GM10248 (cell line): ENCODE measurements at regions of chr6 and their contacts with region 1.

Region 1: DNA sequence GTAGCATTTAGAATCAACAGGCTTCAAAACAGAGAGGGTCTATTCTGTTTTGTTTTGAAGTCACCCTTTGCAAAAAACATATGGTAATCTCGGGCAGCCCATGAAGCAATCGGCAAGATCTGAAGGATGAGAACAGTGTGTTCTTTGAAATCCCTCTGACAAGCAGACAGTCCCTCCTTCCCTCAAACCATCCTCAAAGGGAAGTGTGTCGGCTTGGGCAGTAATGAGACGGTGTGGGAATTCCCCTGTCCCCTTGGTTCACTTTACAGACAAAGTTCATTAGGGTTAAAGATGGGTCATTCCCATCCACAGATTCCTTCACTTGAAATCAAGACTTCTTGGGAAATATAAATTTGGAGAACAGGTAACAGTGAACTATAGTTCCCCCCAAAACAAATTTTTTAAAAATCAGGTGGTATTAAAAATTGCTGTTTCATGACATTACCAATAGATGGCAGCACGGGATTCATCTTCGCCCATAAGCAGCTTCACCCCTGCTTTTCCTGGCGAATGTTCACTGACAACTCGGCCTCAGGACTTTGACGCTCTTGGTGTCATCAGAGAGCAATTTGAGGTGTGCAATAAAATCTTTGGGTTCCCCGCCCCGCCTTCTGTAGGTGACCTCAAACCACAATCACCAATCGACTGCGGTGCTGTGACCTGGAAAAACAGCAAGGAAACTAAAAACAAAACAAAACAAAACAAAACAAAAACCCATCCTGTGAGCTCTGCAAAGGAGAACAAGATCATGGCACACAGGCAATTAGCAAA is 159.3 kb upstream of the TNFAIP3 start:
- DNase-seq: peak; percentile 67
- CTCF ChIP-seq: peak; percentile 62

Region 2: DNA sequence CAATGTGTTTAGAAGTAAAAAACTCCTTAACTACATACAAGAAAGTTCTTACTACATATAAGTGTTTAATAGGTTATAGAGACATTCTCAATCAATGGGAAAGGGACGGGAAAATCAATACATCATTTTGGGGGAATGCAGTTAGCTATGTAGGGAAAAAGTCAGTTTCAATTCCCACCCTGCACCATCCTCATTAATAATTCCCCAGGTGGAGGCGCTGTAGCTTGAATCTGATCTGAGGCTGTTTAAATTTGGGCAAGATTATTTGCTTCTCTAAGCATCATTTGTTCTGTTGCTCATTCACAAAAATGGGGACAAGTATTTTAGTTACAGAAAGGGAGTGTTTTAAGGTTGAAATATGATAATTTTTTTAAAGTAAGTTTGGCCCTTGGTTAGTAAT is 232.7 kb before region 1 on chr6:
- CTCF ChIA-PET with region 1: no interaction called
- POLR2A ChIA-PET with region 1: no interaction called
- DNase-seq: no peak
- CTCF ChIP-seq: no peak

Region 3: GRCh38 chr6:137697267-137697938 is 10.4 kb before region 1 on chr6:
- CTCF ChIA-PET with region 1: interaction called, 34 read pairs
- POLR2A ChIA-PET with region 1: no interaction called
- DNase-seq: no peak
- CTCF ChIP-seq: peak; percentile 26

Region 4: GRCh38 chr6:137791281-137792159 is 83.7 kb after region 1 on chr6:
- CTCF ChIA-PET with region 1: interaction called, 20 read pairs
- POLR2A ChIA-PET with region 1: no interaction called
- DNase-seq: no peak
- CTCF ChIP-seq: no peak

Region 5: DNA sequence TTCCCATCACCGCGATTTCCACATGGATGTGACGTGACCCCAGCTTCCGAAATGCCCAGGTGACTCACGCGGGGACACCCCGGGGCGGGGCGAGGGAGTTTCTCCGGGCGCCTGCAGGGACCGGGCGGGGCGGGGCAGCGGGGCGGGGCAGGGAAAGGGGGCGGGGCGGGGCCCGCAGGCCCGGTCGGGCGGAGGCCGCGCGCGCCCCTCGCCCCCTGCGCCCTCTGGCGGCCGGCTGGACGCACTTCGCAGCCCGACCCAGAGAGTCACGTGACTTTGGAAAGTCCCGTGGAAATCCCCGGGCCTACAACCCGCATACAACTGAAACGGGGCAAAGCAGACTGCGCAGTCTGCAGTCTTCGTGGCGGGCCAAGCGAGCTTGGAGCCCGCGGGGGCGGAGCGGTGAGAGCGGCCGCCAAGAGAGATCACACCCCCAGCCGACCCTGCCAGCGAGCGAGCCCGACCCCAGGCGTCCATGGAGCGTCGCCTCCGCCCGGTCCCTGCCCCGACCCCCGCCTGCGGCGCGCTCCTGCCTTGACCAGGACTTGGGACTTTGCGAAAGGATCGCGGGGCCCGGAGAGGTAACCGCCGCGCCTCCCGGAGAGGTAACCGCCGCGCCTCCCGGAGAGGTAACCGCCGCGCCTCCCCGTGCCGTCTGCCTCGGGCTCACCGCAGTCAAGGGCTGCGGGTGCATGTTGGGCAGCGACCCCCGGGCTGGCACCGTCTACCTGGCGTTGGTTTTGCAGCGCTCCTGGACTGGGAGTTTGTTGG is 159.3 kb after region 1 on chr6 and contains the start of gene TNFAIP3:
- CTCF ChIA-PET with region 1: interaction called, 25 read pairs
- POLR2A ChIA-PET with region 1: interaction called, 4 read pairs
- DNase-seq: peak; percentile 96
- CTCF ChIP-seq: peak; percentile 87

Region 6: GRCh38 chr6:137878486-137879285 is 170.9 kb after region 1 on chr6:
- CTCF ChIA-PET with region 1: interaction called, 11 read pairs
- POLR2A ChIA-PET with region 1: no interaction called
- DNase-seq: no peak
- CTCF ChIP-seq: no peak

Region 7: GRCh38 chr6:138001750-138002349 is 294.1 kb after region 1 on chr6:
- CTCF ChIA-PET with region 1: interaction called, 78 read pairs
- POLR2A ChIA-PET with region 1: no interaction called
- DNase-seq: peak; percentile 40
- CTCF ChIP-seq: peak; percentile 95